GM18951 (cell line): ENCODE measurements at regions of chr3 and their contacts with region 1.

Region 1: GRCh38 chr3:112979240-112979832 is 4.4 kb upstream of the CD200R1 start:
- POLR2A ChIP-seq: no peak

Region 2: GRCh38 chr3:112642912-112643506 is 336.3 kb before region 1 on chr3:
- in situ Hi-C with region 1: loop called (anchors 10 kb)
- POLR2A ChIP-seq: no peak

Region 3: GRCh38 chr3:112734718-112735350 is 244.5 kb before region 1 on chr3:
- in situ Hi-C with region 1: loop called (anchors 10 kb)
- POLR2A ChIP-seq: no peak

Region 4: DNA sequence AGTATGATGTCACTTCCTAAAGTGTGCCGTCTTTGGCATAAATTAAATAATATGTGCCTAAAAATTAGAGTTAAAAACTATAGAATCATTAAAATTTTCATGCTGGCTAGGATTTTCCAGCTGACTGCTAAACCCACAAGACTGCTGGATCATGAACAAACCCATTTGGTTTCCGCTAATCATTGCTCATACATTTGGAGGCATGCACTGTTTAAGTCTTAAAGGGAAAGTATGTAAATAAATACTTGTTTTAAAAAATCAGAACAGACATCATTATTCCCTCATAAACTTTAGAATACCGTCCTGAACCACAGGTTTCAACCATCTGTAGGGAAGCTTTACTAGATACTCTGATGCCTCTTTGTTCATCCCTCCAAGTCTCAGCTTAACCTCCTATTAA is 794.0 kb after region 1 on chr3:
- in situ Hi-C with region 1: no loop called
- POLR2A ChIP-seq: no peak

Region 5: DNA sequence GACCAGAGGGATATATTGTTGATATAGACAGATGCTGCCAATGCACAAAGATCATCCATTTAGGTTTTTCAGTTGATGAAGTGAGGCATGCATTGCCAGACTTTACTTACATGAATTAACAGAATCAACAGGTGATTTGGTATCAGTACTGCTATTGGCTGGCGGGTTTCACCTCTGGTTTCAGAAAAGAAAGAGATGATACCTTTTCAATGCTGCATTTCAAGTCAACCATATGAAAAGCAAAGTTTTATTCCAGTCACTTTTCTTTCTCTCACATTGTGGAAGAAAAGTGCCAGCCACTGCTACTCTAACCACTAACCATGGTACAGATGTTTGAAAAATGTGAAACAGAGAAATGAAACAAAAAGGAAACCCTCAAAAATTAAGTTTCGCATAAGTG is 1603.6 kb after region 1 on chr3:
- in situ Hi-C with region 1: no loop called
- POLR2A ChIP-seq: no peak